ENCODE measurements at regions of chr3 and their contacts with region 1.

Region 1: DNA sequence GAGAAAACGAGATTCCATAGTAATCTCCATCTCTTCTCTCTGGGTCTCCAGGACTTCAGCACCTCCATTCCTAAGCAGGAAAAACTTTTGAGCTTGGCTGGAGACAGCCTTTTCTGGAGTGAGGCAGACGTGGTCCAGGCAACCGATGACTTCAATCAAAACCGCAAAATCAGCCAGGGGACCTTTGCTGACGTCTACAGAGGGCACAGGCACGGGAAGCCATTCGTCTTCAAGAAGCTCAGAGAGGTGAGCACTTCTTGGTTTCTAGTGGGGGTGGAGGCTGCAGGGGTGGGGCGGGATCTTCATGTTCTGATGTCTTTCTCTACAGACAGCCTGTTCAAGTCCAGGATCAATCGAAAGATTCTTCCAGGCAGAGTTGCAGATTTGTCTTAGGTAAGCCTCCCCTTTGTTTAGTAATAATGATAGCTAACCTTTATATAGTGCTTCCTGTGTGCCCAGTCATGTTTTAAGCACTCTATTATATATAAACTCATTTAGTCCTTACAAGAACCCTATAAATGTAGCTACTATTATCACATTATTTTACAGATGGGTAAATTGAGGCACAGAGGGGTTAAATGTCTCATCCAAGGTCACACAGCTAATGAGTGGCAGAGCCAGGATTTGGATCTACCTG is 35.0 kb upstream of the TATDN2 start:
- DNase-seq: no peak
- H3K4me3 ChIP-seq: no peak overlapping the region
- H3K27ac ChIP-seq: no peak overlapping the region
- H3K4me1 ChIP-seq: no peaks in the 10 kb centered on the region
- H3K27me3 ChIP-seq: no peaks in the 10 kb centered on the region
- CTCF ChIP-seq: no peak
- POLR2A ChIP-seq: no peak

Region 2: GRCh38 chr3:10164546-10165393 is 48.5 kb before region 1 on chr3 and contains the start of gene IRAK2:
- intact Hi-C with region 1: loop called (anchors 10 kb)
- DNase-seq: peak; percentile 71 to 73
- H3K4me3 ChIP-seq: peak within 1 kb of the TSS; percentile 56 to 80
- H3K27ac ChIP-seq: peak within 1 kb of the TSS; percentile 64 to 77
- H3K4me1 ChIP-seq: no peaks in the 10 kb centered on the region
- H3K27me3 ChIP-seq: no peaks in the 10 kb centered on the region
- CTCF ChIP-seq: peak; percentile 74 to 100 (median 82)
- POLR2A ChIP-seq: peak; percentile 43 to 64
- total RNA-seq, gene IRAK2: 0.29 to 8.7 (median 3.7) TPM

Region 3: DNA sequence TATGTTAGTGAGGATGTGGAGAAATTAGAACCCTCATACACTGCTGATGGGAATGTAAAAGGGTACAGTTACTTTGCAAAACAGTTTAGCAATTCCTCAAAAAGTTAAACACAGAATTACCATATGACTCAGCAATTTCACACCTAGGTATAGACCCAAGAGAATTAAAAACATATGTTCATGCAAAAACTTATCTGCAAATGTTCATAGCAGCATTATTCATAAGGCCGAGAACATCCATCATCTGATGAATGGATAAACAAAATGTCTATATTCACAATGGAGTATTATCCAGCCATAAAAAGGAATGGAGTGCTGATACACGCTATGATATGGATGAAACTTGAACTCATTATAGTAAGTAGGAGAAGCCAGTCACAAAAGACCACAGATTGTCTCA is 97.3 kb after region 1 on chr3:
- intact Hi-C with region 1: no loop called
- DNase-seq: no peak
- H3K4me3 ChIP-seq: no peak overlapping the region
- H3K27ac ChIP-seq: no peak overlapping the region
- H3K4me1 ChIP-seq: no peaks in the 10 kb centered on the region
- H3K27me3 ChIP-seq: no peaks in the 10 kb centered on the region
- CTCF ChIP-seq: no peak
- POLR2A ChIP-seq: no peak

Measured in uterus (tissue), 4 donors.